H1 (cell line): ENCODE measurements at regions of chr11 and their contacts with region 1.

Region 1: DNA sequence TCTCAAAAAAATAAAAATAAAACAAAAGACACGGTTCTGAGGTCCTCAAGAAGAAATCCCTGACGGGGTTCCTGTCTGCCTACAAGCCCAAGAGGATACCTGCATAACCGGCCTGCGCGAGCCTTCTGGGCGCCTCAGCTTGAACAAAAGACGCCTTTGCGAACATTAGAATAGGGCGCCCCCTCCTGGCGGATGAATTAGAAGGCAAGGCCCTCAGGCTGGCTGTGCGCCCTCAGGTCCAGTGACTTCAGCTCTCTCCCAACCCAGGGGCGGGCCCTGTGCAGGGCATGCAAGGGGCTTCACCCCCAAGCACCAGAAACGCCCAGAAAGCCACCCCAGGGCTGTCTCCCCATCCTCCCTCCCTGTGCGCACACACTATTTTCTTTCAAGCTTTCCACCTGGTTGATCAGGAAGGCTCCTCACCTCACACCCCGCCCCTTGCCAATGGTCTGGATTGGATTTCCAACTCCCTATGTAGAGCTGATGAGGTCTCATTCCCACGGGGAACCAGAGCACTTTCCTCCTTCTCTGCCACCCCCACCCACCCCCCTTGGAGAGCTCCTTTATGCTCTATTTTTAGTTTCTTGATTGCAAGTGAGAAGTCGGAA is 273.3 kb downstream of the BUD13 start:
- DNase-seq: peak; percentile 87 to 99
- H3K4me3 ChIP-seq: no peak overlapping the region
- H3K27ac ChIP-seq: no peak overlapping the region
- H3K4me1 ChIP-seq: peaks cover 11 to 27% (median 15%) of the 10 kb centered on the region in 4 experiments
- H3K27me3 ChIP-seq: peaks cover 0 to 4% (median 1%) of the 10 kb centered on the region in 4 experiments; a peak in 2 of 7 replicates
- CTCF ChIP-seq: peak; percentile 74 to 91 (median 83)
- EP300 ChIP-seq: no peak
- POLR2A ChIP-seq: no peak
- RAD21 ChIP-seq: peak; percentile 85 to 94

Region 2: GRCh38 chr11:116357784-116358544 is 141.5 kb before region 1 on chr11:
- CTCF ChIA-PET with region 1: interaction called, 44 read pairs
- POLR2A ChIA-PET with region 1: no interaction called
- DNase-seq: peak; percentile 85 to 88
- H3K4me3 ChIP-seq: no peak overlapping the region
- H3K27ac ChIP-seq: no peak overlapping the region
- H3K4me1 ChIP-seq: peaks cover 0 to 18% (median 9%) of the 10 kb centered on the region in 4 experiments; a peak in 6 of 7 replicates
- H3K27me3 ChIP-seq: no peaks in the 10 kb centered on the region
- CTCF ChIP-seq: peak; percentile 96 to 97 (median 97)
- EP300 ChIP-seq: peak in 1 of 2 experiments; percentile 44; a peak in 1 of 3 replicates
- POLR2A ChIP-seq: no peak
- RAD21 ChIP-seq: peak; percentile 80 to 92

Region 3: DNA sequence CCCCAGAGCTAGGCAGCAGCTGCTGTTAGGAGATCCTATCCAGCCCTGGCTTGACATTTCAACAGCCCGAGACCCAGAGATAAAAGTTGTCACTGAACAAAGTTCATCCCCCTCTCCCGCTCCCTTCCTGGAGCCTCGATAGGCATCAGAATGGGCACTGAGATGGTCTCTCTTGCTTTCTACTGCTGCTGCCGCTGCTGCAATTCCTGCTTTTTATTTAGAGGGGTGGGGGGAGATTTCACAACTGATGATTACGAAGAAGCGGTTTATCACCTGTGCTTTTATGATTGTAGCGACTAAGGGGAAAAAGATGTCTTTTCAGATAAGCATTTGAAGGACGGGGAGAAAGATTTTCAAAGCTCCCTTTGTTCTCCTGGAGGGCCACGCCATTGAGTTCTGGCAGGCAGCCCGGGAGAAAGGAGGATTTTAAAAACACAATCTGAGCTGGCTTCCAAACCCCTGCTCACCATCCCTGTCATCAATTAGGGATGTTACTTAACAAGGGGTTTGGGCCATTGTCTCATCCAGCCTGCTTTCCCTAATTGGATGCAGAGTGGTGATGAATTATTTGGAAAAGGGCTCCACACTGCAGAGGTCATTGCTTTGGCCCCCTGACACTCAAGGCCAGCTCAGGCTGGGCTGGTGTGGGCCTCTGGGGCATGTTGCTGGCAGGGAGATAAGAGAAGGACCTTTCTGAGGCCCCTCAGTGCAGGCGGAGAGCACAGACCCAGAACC is 71.4 kb before region 1 on chr11:
- CTCF ChIA-PET with region 1: interaction called, 31 read pairs
- POLR2A ChIA-PET with region 1: no interaction called
- DNase-seq: no peak
- H3K4me3 ChIP-seq: no peak overlapping the region
- H3K27ac ChIP-seq: no peak overlapping the region
- H3K4me1 ChIP-seq: peaks cover 0 to 11% (median 4%) of the 10 kb centered on the region in 4 experiments; a peak in 4 of 7 replicates
- H3K27me3 ChIP-seq: no peaks in the 10 kb centered on the region
- CTCF ChIP-seq: no peak
- EP300 ChIP-seq: no peak
- POLR2A ChIP-seq: no peak
- RAD21 ChIP-seq: no peak

Region 4: DNA sequence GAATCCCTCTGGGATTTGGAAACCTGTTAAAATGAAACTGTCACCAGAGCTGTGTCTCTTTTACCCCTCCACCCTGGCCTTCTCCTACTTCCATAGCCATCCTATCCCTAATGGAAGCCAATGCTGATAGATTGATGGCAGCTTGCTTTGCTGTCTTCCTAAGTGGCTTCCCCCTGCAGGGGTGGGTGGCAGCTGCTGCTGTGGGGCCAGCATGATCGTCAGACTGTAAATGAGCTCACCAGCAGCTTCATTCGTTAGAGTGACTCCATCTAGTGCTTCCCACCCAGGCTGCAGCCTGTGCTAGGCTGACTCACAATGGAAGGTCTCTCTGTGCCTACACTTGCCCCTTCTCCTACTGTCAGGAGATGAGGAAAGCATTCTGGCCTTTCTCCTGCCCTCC is 37.7 kb before region 1 on chr11:
- CTCF ChIA-PET with region 1: interaction called, 23 read pairs
- POLR2A ChIA-PET with region 1: interaction called, 3 read pairs
- DNase-seq: no peak
- H3K4me3 ChIP-seq: no peak overlapping the region
- H3K27ac ChIP-seq: no peak overlapping the region
- H3K4me1 ChIP-seq: peaks cover 0 to 12% (median 4%) of the 10 kb centered on the region in 4 experiments; a peak in 2 of 7 replicates
- H3K27me3 ChIP-seq: no peaks in the 10 kb centered on the region
- CTCF ChIP-seq: peak; percentile 9 to 50 (median 37)
- EP300 ChIP-seq: no peak
- POLR2A ChIP-seq: no peak
- RAD21 ChIP-seq: peak; percentile 32 to 61

Region 5: GRCh38 chr11:116488131-116488530 is 11.4 kb before region 1 on chr11:
- CTCF ChIA-PET with region 1: interaction called, 17 read pairs
- POLR2A ChIA-PET with region 1: no interaction called
- DNase-seq: no peak
- H3K4me3 ChIP-seq: no peak overlapping the region
- H3K27ac ChIP-seq: no peak overlapping the region
- H3K4me1 ChIP-seq: peaks cover 0 to 2% (median 0%) of the 10 kb centered on the region in 4 experiments; a peak in 2 of 7 replicates
- H3K27me3 ChIP-seq: peaks cover 0 to 13% (median 9%) of the 10 kb centered on the region in 4 experiments; a peak in 5 of 7 replicates
- CTCF ChIP-seq: no peak
- EP300 ChIP-seq: no peak
- POLR2A ChIP-seq: no peak
- RAD21 ChIP-seq: no peak

Region 6: DNA sequence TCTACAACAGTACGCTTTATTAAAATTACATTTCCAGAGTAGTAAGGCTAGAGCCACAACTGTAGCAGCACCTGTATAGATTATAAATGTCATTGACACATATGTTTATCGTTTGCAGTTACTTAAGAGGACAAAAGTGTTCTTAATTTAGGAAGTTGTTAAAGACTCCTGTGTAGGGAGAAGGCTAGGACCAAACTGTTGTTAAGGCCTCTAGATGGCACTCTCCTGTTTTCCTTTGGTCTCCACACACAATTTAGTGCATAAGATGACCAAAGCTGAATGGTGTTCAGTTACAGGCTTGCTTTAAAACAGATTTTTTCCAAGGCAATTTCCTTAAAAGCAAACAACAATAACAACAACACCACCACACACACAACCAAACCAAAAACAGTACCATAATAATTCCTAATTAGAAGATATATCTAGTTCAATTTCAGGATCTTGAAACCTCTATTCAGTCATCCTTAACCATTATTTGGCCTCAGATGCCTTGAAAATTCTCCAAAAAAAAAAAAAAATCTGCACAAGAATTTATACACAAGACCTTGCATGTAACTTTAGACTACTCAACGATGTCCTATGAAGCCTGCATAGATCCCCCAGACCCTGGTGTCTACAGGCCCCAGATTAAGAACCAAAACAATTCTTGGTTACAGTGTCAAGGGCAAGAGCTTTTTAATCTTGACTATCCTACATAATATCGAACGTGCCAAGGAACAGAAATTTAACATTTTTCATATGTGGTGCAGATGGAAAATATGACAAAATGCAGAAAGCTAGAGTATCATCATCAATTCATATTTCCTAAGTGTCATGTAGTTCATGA is 380.5 kb after region 1 on chr11:
- CTCF ChIA-PET with region 1: no interaction called
- POLR2A ChIA-PET with region 1: no interaction called
- DNase-seq: no peak
- H3K4me3 ChIP-seq: no peak overlapping the region
- H3K27ac ChIP-seq: no peak overlapping the region
- H3K4me1 ChIP-seq: no peaks in the 10 kb centered on the region
- H3K27me3 ChIP-seq: no peaks in the 10 kb centered on the region
- CTCF ChIP-seq: peak in 2 of 3 experiments; percentile 63 to 78; a peak in 3 of 4 replicates
- EP300 ChIP-seq: no peak
- POLR2A ChIP-seq: no peak
- RAD21 ChIP-seq: peak; percentile 74 to 76